GM12878 (cell line): ENCODE measurements at regions of chr5 and their contacts with region 1.

Region 1: DNA sequence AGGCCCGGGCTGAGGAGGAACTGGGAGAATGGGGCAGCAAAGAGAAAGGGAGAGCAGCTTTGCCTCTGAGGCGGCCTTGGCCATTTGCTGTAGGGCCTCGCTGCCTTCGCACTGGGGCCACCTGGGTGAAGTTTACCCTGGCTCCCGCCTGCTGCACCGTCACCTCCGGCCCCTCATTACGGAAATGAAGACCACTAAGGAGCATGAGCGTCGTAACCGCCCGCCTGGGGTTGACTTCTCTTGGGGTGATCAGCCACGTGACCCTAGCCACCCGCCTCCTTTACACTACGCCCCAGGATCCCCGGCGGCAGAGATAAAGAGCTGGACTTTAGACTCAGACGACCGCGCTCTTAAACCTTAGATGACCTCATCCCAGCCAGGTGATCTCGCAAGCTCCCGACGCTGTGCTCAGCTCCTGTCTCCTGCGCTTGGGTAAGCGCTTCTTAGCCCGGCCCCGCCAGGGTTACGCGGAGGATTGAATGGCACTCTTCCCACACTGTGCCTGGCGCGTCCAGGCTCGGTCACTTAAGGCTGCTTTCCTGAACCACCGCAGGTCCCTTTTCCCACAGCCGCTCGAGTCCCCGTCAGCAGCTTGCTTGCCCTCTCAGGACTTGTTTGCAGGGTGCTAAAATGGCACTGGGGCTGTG is 107.9 kb upstream of the LARP1 start:
- DNase-seq: no peak
- ATAC-seq: peak; percentile 90
- H3K4me3 ChIP-seq: peak overlapping the region; percentile 40; the same call in 1 of the 2 replicates
- H3K27ac ChIP-seq: no peak overlapping the region
- H3K4me1 ChIP-seq: peaks cover 4% of the 10 kb centered on the region
- H3K27me3 ChIP-seq: peaks cover 0 to 3% of the 10 kb centered on the region in 2 experiments; a peak in 2 of 4 replicates
- CTCF ChIP-seq: no peak
- EP300 ChIP-seq: no peak
- POLR2A ChIP-seq: no peak
- RAD21 ChIP-seq: no peak

Region 2: DNA sequence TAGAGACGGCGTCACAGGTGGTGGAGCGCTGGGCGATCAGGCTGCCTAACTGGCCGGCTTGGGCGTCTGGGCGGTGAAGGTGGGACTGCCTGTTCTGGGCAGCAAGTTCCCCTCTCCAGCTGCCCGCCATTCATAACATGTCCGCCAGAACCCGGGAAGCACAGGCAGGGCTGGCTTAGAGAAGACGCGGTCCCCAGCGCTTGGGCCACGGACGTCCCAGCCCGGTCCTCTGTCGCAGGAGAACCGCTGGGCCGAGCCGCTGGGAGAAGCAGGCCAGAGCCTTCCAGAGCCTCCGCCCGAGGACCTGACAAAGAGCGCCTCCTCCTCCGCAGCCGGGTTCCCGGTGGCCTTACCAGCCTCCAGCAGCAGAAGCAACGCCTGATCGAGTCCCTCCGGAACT is 154.0 kb before region 1 on chr5:
- CTCF ChIA-PET with region 1: no interaction called
- POLR2A ChIA-PET with region 1: no interaction called
- RAD21 ChIA-PET with region 1: no interaction called
- SMC1A ChIA-PET with region 1: no interaction called
- in situ Hi-C with region 1: no loop called
- intact Hi-C with region 1: no loop called
- DNase-seq: no peak
- ATAC-seq: no peak
- H3K4me3 ChIP-seq: no peak overlapping the region
- H3K27ac ChIP-seq: no peak overlapping the region
- H3K4me1 ChIP-seq: no peaks in the 10 kb centered on the region; the same call in 1 of the 2 replicates
- H3K27me3 ChIP-seq: no peaks in the 10 kb centered on the region
- CTCF ChIP-seq: no peak
- EP300 ChIP-seq: no peak
- POLR2A ChIP-seq: no peak
- RAD21 ChIP-seq: no peak

Region 3: DNA sequence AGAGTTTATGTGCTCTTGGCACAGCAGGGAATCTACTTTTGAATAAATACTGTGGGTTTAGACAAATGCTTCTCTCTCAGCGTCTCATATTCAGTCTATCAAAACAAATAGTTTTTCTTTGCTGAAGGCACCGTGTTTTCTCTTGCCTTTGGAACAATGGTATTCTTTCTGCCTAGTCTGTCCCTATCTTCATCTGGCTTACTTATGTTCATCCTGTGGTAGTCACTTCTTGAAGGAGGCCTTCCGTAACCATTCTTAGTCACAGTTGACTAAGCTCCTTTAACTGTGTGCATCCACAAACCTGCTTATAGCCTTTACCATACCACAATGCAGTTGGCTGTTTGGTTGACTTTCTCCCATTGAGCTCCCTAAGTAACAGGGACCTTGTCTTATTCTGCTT is 153.8 kb after region 1 on chr5:
- CTCF ChIA-PET with region 1: interaction called, 14 read pairs
- POLR2A ChIA-PET with region 1: no interaction called
- RAD21 ChIA-PET with region 1: no interaction called
- SMC1A ChIA-PET with region 1: no interaction called
- in situ Hi-C with region 1: no loop called
- intact Hi-C with region 1: no loop called
- DNase-seq: no peak
- ATAC-seq: no peak
- H3K4me3 ChIP-seq: no peak overlapping the region
- H3K27ac ChIP-seq: no peak overlapping the region
- H3K4me1 ChIP-seq: no peaks in the 10 kb centered on the region
- H3K27me3 ChIP-seq: no peaks in the 10 kb centered on the region
- CTCF ChIP-seq: no peak
- EP300 ChIP-seq: no peak
- POLR2A ChIP-seq: no peak
- RAD21 ChIP-seq: no peak

Region 4: GRCh38 chr5:154811653-154812365 is 164.6 kb after region 1 on chr5:
- CTCF ChIA-PET with region 1: interaction called, 18 read pairs
- POLR2A ChIA-PET with region 1: no interaction called
- RAD21 ChIA-PET with region 1: interaction called, 4 read pairs
- SMC1A ChIA-PET with region 1: interaction called, 7 read pairs
- in situ Hi-C with region 1: loop called (anchors 5 kb)
- intact Hi-C with region 1: loop called (anchors 1 kb)
- DNase-seq: peak; percentile 9
- ATAC-seq: peak; percentile 90
- H3K4me3 ChIP-seq: no peak overlapping the region
- H3K27ac ChIP-seq: no peak overlapping the region
- H3K4me1 ChIP-seq: no peaks in the 10 kb centered on the region
- H3K27me3 ChIP-seq: no peaks in the 10 kb centered on the region
- CTCF ChIP-seq: peak; percentile 74 to 88 (median 84)
- EP300 ChIP-seq: no peak
- POLR2A ChIP-seq: no peak
- RAD21 ChIP-seq: peak; percentile 91

Region 5: GRCh38 chr5:155049569-155050383 is 402.5 kb after region 1 on chr5:
- CTCF ChIA-PET with region 1: interaction called, 12 read pairs
- POLR2A ChIA-PET with region 1: no interaction called
- RAD21 ChIA-PET with region 1: no interaction called
- SMC1A ChIA-PET with region 1: no interaction called
- in situ Hi-C with region 1: no loop called
- intact Hi-C with region 1: loop called (anchors 5 kb)
- DNase-seq: no peak
- ATAC-seq: peak; percentile 59; the same call in 2 of the 3 replicates
- H3K4me3 ChIP-seq: no peak overlapping the region
- H3K27ac ChIP-seq: no peak overlapping the region
- H3K4me1 ChIP-seq: no peaks in the 10 kb centered on the region
- H3K27me3 ChIP-seq: no peaks in the 10 kb centered on the region; a peak in 1 of 4 replicates
- CTCF ChIP-seq: peak; percentile 37 to 44 (median 41); a peak in 3 of 6 replicates
- EP300 ChIP-seq: no peak
- POLR2A ChIP-seq: no peak
- RAD21 ChIP-seq: no peak; the same call in 1 of the 2 replicates